ENCODE measurements at regions of chr1 and their contacts with region 1.

Region 1: DNA sequence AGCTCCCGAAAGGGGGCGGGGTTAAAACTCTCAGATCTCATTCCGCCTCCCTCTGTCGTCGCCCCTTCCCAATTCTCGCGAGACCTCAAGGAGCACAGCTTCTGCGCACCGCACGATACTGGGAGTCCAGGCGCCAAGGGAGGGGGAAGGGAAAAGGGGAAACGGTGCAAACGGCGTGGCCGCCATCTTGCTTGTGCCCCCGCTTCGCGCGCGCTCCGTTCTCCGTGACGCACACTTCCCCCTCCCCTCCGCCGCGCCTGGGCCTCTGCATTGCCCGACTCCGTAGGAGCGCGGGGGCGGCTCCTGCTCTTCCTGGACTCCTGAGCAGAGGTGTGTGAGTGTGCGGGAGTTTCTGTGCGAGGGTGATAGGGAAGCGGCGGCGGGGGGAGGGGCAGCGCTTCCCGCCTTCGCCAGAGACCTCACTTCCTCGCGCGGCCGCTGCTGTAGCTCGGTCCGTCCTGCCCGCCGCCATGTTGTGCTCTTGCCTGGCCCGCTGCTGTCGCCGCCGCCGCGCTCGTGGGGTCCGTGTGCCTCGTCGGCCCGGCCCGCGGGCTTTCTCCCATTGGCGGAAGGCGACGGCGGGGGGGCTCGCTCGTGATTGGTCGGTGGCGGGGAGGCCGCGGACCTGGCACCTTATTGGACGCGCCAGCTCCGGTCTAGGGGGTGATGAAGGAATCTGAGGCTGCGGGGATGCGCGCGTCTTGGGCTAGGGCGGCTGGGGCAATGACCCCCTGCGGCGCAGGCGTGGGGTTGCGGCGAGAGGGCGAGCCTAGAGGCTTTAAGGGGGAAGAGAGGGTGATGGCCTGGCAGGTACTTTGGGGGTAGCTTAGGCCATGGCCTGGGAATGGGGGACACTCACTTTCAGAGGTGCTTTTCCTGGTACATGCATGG is at the start of gene NFYC:
- DNase-seq: peak; percentile 82 to 97 (median 96)
- ATAC-seq: peak; percentile 89
- H3K4me3 ChIP-seq: peak within 1 kb of the TSS; percentile 81
- H3K4me3 Mint-ChIP-seq: peak within 1 kb of the TSS; percentile 91 to 98 (median 95)
- H3K27ac ChIP-seq: peak within 1 kb of the TSS; percentile 99
- H3K27ac Mint-ChIP-seq: peak within 1 kb of the TSS; percentile 91 to 99 (median 97)
- H3K4me1 ChIP-seq: peaks cover 30 to 38% of the 10 kb centered on the region in 2 donors
- H3K4me1 Mint-ChIP-seq: peaks cover 29 to 73% (median 64%) of the 10 kb centered on the region in 7 donors
- H3K27me3 ChIP-seq: no peaks in the 10 kb centered on the region
- H3K27me3 Mint-ChIP-seq: no peaks in the 10 kb centered on the region
- total RNA-seq, gene NFYC: 44.2 to 88.5 (median 73.6) TPM

Region 2: DNA sequence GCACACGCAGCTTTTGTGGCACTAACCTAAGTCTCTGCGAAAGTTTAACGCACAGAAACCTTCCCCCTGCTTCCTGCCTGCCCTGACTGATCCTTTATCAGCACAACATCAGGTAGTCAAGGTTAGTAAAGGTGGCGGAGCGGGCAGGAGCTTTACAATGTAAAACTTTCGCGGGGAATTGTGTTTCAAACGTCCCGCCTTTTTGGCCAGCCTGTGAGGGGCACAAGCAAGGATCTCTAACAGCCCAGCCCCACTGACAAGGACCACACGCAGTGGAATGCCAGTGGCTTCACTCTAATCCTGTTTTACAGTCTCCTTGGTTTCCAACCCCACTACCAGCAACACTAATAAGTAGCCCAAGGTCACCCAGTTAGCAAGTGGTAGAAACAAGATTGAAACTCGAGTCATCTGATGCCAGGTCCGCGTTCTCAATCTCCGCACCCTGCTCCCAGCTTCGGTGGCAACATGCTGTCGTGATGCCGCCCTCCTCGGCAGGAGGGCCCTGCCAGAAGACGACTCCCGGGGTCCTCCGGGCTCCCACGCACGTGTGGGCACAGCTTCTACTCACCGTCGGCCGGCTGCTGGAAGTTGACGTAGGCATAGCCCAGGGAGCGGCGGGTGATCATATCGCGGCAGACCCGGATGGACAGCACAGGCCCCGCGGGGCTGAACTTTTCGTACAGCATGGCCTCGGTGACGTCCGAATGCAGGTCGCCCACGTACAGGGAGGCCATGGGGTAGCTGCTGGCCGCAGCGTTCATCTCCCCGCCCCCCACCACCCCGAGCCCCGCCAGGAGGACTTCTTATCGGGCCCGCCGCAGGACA is 1116.4 kb before region 1 on chr1:
- CTCF ChIA-PET with region 1: no interaction called
- POLR2A ChIA-PET with region 1: no interaction called
- intact Hi-C with region 1: loop called in 1 of 2 experiments (anchors 10 kb)
- DNase-seq: peak; percentile 25 to 72 (median 57)
- ATAC-seq: peak; percentile 45
- H3K4me3 ChIP-seq: peak overlapping the region; percentile 68
- H3K4me3 Mint-ChIP-seq: peak overlapping the region; percentile 86 to 98 (median 91)
- H3K27ac ChIP-seq: peak overlapping the region; percentile 89
- H3K27ac Mint-ChIP-seq: peak overlapping the region; percentile 79 to 96 (median 93)
- H3K4me1 ChIP-seq: peaks cover 18 to 26% of the 10 kb centered on the region in 2 donors
- H3K4me1 Mint-ChIP-seq: peaks cover 19 to 52% (median 49%) of the 10 kb centered on the region in 7 donors
- H3K27me3 ChIP-seq: no peaks in the 10 kb centered on the region
- H3K27me3 Mint-ChIP-seq: no peaks in the 10 kb centered on the region

Region 3: DNA sequence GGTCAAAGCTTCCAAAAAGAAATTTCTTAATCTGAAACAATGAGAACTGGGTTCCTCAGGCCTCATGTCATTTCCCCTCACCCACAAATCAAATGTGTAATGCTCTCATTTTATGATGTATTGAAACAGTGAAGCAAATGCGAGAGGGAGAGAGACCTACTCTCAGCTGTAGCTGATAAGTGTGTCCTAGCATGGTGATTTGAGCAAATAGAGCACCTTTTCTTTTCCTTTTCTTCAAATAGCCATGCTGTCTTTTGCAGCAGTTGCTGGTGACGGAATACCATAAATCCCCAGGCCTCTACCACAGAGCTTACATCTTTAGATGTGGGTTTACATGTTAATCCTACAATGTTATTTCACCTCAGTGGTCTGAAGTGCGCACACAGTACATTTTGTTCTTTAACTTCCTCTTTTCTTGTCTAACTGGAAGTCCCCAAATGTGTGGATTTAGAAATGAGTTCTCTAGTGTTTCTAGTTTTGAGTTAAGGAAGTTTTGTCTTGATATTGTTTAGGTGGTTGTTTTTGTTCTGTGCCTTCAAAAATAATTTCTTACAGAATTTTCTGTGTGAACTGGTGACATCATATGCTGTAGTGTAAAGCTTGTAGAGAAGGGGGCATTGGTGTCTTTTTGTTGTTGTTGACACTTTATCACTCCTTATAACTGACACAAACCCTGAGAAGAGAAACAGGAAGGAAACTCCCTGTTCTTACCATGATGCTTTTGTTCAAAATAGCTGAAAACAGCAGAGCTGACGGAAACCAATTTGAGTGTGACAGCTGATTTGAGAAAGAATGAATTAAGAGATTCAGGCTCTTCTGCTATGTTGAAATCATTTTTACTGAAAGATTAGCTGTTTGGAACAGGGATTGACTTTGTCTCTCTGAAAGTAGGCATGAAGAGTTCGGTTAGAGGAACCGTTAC is 306.1 kb before region 1 on chr1:
- CTCF ChIA-PET with region 1: no interaction called
- POLR2A ChIA-PET with region 1: no interaction called
- intact Hi-C with region 1: loop called in 1 of 2 experiments (anchors 5 kb)
- DNase-seq: peak in 8 of 9 donors; percentile 55 to 97 (median 94)
- ATAC-seq: peak; percentile 86
- H3K4me3 ChIP-seq: peak overlapping the region; percentile 48
- H3K4me3 Mint-ChIP-seq: peak overlapping the region; percentile 79 to 99 (median 87)
- H3K27ac ChIP-seq: peak overlapping the region; percentile 99
- H3K27ac Mint-ChIP-seq: peak overlapping the region; percentile 97 to 99 (median 98)
- H3K4me1 ChIP-seq: peaks cover 82 to 84% of the 10 kb centered on the region in 2 donors
- H3K4me1 Mint-ChIP-seq: peaks cover 71 to 94% (median 90%) of the 10 kb centered on the region in 7 donors
- H3K27me3 ChIP-seq: no peaks in the 10 kb centered on the region
- H3K27me3 Mint-ChIP-seq: no peaks in the 10 kb centered on the region

Region 4: GRCh38 chr1:40668769-40669525 is 22.8 kb before region 1 on chr1:
- CTCF ChIA-PET with region 1: interaction called, 17 read pairs
- POLR2A ChIA-PET with region 1: interaction called, 10 read pairs
- intact Hi-C with region 1: loop called (anchors 1 kb)
- DNase-seq: peak; percentile 58 to 84 (median 73)
- ATAC-seq: peak; percentile 82
- H3K4me3 ChIP-seq: peak overlapping the region; percentile 35
- H3K4me3 Mint-ChIP-seq: peak overlapping the region in 8 of 10 donors; percentile 36 to 68 (median 54)
- H3K27ac ChIP-seq: no peak overlapping the region
- H3K27ac Mint-ChIP-seq: no peak overlapping the region
- H3K4me1 ChIP-seq: peaks cover 9 to 13% of the 10 kb centered on the region in 2 donors
- H3K4me1 Mint-ChIP-seq: peaks cover 8 to 22% (median 17%) of the 10 kb centered on the region in 7 donors
- H3K27me3 ChIP-seq: no peaks in the 10 kb centered on the region
- H3K27me3 Mint-ChIP-seq: peaks cover 0 to 16% (median 0%) of the 10 kb centered on the region in 5 donors

Region 5: DNA sequence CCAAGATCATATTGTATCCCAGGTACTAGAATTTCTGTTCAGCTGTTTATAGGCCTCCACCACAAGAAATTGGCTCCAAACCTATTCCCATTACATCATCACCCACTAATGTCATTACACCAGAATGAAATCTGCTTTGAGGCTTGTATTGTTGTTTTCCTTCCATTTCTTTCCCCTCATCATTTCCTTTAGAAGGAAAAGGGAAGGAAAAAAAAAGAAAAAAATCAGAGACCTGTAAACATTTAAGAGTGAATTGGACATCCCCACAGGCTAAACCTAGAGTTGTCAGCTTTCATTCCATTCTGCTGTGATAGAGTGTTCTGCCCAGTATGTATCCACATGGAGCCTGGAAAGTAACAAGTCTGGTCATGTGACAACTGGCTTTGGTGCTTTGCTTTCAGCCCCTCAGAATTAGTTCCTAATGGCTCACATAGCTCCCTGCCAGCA is 44.3 kb after region 1 on chr1:
- CTCF ChIA-PET with region 1: no interaction called
- POLR2A ChIA-PET with region 1: no interaction called
- intact Hi-C with region 1: no loop called
- DNase-seq: no peak
- ATAC-seq: no peak
- H3K4me3 ChIP-seq: no peak overlapping the region
- H3K4me3 Mint-ChIP-seq: no peak overlapping the region
- H3K27ac ChIP-seq: no peak overlapping the region
- H3K27ac Mint-ChIP-seq: peak overlapping the region in 2 of 9 donors; percentile 11 to 17
- H3K4me1 ChIP-seq: peaks cover 0 to 3% of the 10 kb centered on the region in 2 donors
- H3K4me1 Mint-ChIP-seq: peaks cover 27 to 68% (median 58%) of the 10 kb centered on the region in 7 donors
- H3K27me3 ChIP-seq: no peaks in the 10 kb centered on the region
- H3K27me3 Mint-ChIP-seq: no peaks in the 10 kb centered on the region

Region 6: DNA sequence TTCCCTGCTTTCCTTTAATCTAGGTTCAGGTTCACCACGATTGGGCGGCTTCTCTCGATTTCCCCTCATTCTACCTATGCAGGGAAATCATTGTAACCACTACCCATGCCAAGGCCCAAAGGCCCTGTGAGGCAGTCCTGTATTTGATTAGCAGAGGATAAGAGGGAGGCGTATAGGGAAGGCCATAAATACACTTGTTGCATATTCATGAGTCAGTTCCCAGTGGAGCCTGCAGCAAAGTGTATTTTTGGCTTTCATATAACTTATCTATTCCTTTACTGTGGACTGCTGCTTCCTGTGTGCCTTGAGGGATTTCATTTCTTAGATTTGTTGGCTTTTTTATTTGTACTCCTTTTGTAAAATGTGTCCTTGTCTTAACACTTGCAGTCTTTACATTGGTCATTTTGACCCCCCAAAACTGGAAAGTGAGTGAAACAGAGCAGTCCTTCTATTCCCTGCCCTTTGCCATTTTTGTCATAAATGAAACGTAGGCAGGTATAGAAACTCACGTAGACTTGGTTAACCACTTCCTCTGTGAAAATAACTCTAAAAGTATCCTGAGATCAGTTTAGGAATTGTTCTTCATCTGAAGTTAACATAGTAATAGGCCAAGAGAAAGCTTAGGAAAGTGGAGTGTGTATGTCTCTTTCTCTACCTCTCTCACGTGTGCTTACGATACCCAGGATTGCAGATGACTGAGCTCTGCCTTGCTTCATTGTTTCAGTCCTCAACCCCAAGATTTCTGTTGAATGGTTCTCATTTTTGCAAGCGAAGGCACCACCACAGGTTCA is 72.2 kb after region 1 on chr1:
- CTCF ChIA-PET with region 1: no interaction called
- POLR2A ChIA-PET with region 1: interaction called, 10 read pairs
- intact Hi-C with region 1: loop called in 1 of 2 experiments (anchors 5 kb)
- DNase-seq: peak in 6 of 9 donors; percentile 19 to 48 (median 39)
- ATAC-seq: peak; percentile 56
- H3K4me3 ChIP-seq: no peak overlapping the region
- H3K4me3 Mint-ChIP-seq: peak overlapping the region; percentile 12 to 81 (median 62)
- H3K27ac ChIP-seq: peak overlapping the region; percentile 60
- H3K27ac Mint-ChIP-seq: peak overlapping the region; percentile 75 to 91 (median 89)
- H3K4me1 ChIP-seq: peaks cover 0 to 31% of the 10 kb centered on the region in 2 donors
- H3K4me1 Mint-ChIP-seq: peaks cover 22 to 52% (median 46%) of the 10 kb centered on the region in 7 donors
- H3K27me3 ChIP-seq: no peaks in the 10 kb centered on the region
- H3K27me3 Mint-ChIP-seq: no peaks in the 10 kb centered on the region

Region 7: DNA sequence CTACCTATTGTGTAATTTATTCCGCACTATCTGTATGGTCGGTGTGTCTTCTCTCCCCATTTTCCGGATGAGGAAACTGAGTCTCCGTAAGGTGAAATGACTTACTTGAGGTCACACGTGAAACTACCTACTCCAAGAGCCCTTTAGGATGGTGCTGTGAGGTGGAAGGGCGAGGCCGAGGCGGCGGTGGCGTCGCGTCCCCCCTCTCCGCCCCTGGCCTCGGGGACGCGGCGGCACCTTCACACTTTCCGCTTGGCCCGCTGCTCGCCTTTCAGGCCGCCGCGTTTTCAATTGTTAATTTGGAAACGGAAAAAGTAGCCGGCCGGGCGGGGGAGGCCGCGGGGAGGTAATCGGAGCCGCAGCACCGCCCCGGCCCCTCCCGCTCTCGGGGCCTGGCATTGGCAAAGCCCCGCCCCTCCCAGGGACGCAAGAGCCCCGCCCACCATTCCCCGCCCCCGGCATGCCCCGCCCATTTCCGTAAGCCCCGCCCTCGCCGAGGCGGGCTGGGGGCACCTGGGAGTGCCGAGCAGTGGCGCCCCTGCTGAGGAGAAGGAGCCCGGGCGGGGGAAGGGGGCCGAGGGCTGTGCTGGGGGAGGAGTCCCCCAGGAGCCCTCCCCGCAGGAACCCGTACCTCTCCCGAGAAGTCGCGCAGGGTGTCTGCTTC is 110.4 kb after region 1 on chr1:
- CTCF ChIA-PET with region 1: no interaction called
- POLR2A ChIA-PET with region 1: interaction called, 3 read pairs
- intact Hi-C with region 1: loop called in 1 of 2 experiments (anchors 1 kb)
- DNase-seq: peak; percentile 76 to 87 (median 84)
- ATAC-seq: peak; percentile 98
- H3K4me3 ChIP-seq: peak overlapping the region; percentile 65
- H3K4me3 Mint-ChIP-seq: peak overlapping the region; percentile 70 to 89 (median 78)
- H3K27ac ChIP-seq: peak overlapping the region; percentile 77
- H3K27ac Mint-ChIP-seq: peak overlapping the region; percentile 69 to 92 (median 87)
- H3K4me1 ChIP-seq: peaks cover 16 to 21% of the 10 kb centered on the region in 2 donors
- H3K4me1 Mint-ChIP-seq: peaks cover 15 to 41% (median 31%) of the 10 kb centered on the region in 7 donors
- H3K27me3 ChIP-seq: no peaks in the 10 kb centered on the region
- H3K27me3 Mint-ChIP-seq: peaks cover 0 to 2% (median 0%) of the 10 kb centered on the region in 5 donors

Region 8: GRCh38 chr1:40979233-40980067 is 287.7 kb after region 1 on chr1 and contains the start of gene CTPS1:
- CTCF ChIA-PET with region 1: no interaction called
- POLR2A ChIA-PET with region 1: interaction called, 6 read pairs
- intact Hi-C with region 1: loop called (anchors 1 kb)
- DNase-seq: peak; percentile 88 to 97 (median 95)
- ATAC-seq: peak; percentile 92
- H3K4me3 ChIP-seq: peak within 1 kb of the TSS; percentile 62
- H3K4me3 Mint-ChIP-seq: peak within 1 kb of the TSS; percentile 78 to 98 (median 92)
- H3K27ac ChIP-seq: peak within 1 kb of the TSS; percentile 97
- H3K27ac Mint-ChIP-seq: peak within 1 kb of the TSS; percentile 84 to 97 (median 94)
- H3K4me1 ChIP-seq: peaks cover 10 to 11% of the 10 kb centered on the region in 2 donors
- H3K4me1 Mint-ChIP-seq: peaks cover 17 to 42% (median 29%) of the 10 kb centered on the region in 7 donors
- H3K27me3 ChIP-seq: no peaks in the 10 kb centered on the region
- H3K27me3 Mint-ChIP-seq: no peaks in the 10 kb centered on the region
- total RNA-seq, gene CTPS1: 16.4 to 57.6 (median 40.6) TPM

Region 9: GRCh38 chr1:41842993-41843755 is 1151.4 kb after region 1 on chr1:
- CTCF ChIA-PET with region 1: no interaction called
- POLR2A ChIA-PET with region 1: no interaction called
- intact Hi-C with region 1: no loop called
- DNase-seq: no peak
- ATAC-seq: no peak
- H3K4me3 ChIP-seq: no peak overlapping the region
- H3K4me3 Mint-ChIP-seq: no peak overlapping the region
- H3K27ac ChIP-seq: no peak overlapping the region
- H3K27ac Mint-ChIP-seq: no peak overlapping the region
- H3K4me1 ChIP-seq: no peaks in the 10 kb centered on the region
- H3K4me1 Mint-ChIP-seq: peaks cover 0 to 18% (median 11%) of the 10 kb centered on the region in 7 donors
- H3K27me3 ChIP-seq: no peaks in the 10 kb centered on the region
- H3K27me3 Mint-ChIP-seq: peaks cover 0 to 3% (median 0%) of the 10 kb centered on the region in 5 donors

Measured in naive thymus-derived CD4-positive, alpha-beta T cell (primary cell).